ENCODE measurements at regions of chr2 and their contacts with region 1.

Region 1: DNA sequence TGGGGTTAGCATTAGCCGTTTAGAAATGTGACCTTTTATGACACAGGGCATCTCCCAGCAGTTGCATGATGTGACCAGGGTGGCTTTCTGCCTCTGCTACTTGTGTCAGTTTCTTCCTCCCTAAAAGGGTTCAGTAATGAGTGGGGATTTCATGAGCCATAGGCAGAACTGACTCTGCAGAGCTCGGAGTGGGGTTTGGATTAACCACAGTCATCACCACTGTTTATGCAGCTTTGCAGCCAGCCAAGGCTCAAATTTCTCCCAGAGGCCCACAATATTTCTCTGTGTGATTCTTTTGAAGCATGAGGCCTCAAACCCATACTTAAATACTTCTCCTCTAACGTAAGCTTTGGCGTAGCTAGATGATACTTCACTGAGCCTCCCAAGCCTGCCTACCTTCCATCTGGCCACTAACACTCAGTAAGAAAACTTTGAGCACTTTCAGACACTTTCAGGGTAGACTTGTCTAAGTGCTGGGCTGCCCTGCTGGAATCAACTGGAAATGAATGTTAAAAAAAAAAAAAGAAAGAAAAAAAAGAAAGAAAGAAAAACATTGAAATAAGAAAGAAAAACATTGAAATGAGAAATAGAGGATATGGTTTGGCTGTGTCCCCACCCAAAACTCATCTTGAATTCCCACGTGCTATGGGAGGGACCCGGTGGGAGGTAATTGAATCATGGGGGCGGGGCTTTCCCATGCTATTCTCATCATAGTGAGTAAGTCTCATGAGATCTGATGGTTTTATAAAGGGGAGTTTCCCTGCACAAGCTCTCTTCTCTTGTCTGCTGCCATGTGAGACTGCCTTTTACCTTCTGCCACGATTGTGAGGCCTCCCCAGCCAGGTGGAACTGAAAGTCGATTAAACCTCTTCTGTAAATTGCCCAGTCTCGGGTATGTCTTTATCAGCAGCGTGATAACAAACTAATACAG is 11.5 kb upstream of the LAPTM4A start:
- DNase-seq: peak; percentile 33 to 90
- H3K4me3 ChIP-seq: no peak overlapping the region
- H3K27ac ChIP-seq: peak overlapping the region; percentile 71 to 85
- H3K4me1 ChIP-seq: peaks cover 0 to 2% of the 10 kb centered on the region in 2 donors
- H3K27me3 ChIP-seq: no peaks in the 10 kb centered on the region
- CTCF ChIP-seq: peak in 1 of 3 experiments; percentile 7

Region 2: DNA sequence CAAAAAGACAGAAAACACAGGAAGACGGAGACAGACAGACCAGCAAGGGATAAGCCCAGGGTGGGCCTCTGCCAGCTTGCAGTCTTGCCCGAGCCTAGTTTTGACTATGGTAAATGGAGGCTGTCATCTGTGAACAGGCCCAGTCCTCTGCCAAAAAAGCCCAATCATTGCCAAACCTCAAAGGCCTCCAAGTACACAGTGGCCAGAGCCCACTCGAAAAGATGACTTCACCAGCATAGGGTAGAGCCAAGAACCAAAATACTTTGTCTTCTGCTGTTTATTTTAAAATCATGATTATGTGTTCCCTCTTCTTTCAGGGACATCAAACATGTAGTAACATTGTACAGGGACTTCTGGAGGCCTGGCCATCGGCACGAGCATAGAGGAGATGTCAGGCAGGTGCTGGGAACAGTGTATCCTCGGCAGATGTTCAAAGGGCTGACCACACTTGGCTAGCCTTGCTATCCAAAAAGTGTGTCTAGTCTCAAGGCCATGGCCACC is 227.0 kb before region 1 on chr2:
- intact Hi-C with region 1: no loop called
- DNase-seq: no peak
- H3K4me3 ChIP-seq: no peak overlapping the region
- H3K27ac ChIP-seq: peak overlapping the region; percentile 68 to 74
- H3K4me1 ChIP-seq: peaks cover 0 to 10% of the 10 kb centered on the region in 2 donors
- H3K27me3 ChIP-seq: no peaks in the 10 kb centered on the region
- CTCF ChIP-seq: no peak

Region 3: DNA sequence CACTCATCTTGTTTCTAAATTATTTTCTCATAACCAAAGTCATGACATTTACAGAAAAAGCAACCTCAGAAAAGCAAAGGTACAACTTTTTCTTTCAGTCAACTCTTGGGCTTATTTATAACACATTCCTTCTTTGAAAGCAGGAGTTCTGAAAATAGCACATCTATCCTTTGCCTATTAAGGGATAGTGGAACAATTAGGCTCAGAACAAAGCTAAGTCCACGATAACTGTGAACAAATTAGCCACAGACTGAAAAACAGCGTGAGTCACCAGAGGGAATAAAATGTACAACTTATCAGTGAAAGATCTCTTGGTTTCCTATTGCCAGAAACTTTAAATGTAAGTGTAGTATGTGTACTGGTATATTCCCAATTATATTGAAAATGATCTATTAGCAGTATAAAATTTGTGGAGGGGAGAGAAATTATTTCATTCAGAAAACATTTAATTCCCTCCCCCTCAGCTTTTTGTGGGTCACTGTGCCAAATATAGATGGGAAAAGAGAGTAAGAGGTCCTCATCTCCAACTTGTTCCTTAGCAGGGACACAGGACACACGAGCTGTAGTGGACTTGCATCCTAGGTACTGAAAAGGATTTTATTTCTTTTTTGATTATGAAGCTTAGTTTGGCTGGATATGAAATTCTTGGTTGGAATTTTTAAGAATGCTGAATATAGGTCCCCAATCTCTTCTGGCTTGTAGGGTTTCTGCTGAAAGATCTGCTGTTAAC is 35.0 kb before region 1 on chr2:
- intact Hi-C with region 1: loop called (anchors 5 kb)
- DNase-seq: no peak
- H3K4me3 ChIP-seq: no peak overlapping the region
- H3K27ac ChIP-seq: peak overlapping the region; percentile 54 to 76
- H3K4me1 ChIP-seq: peaks cover 0 to 7% of the 10 kb centered on the region in 2 donors
- H3K27me3 ChIP-seq: no peaks in the 10 kb centered on the region
- CTCF ChIP-seq: no peak

Region 4: GRCh38 chr2:20235655-20236302 is 172.9 kb after region 1 on chr2:
- intact Hi-C with region 1: no loop called
- DNase-seq: no peak
- H3K4me3 ChIP-seq: no peak overlapping the region
- H3K27ac ChIP-seq: no peak overlapping the region
- H3K4me1 ChIP-seq: no peaks in the 10 kb centered on the region
- H3K27me3 ChIP-seq: no peaks in the 10 kb centered on the region
- CTCF ChIP-seq: no peak

Region 5: DNA sequence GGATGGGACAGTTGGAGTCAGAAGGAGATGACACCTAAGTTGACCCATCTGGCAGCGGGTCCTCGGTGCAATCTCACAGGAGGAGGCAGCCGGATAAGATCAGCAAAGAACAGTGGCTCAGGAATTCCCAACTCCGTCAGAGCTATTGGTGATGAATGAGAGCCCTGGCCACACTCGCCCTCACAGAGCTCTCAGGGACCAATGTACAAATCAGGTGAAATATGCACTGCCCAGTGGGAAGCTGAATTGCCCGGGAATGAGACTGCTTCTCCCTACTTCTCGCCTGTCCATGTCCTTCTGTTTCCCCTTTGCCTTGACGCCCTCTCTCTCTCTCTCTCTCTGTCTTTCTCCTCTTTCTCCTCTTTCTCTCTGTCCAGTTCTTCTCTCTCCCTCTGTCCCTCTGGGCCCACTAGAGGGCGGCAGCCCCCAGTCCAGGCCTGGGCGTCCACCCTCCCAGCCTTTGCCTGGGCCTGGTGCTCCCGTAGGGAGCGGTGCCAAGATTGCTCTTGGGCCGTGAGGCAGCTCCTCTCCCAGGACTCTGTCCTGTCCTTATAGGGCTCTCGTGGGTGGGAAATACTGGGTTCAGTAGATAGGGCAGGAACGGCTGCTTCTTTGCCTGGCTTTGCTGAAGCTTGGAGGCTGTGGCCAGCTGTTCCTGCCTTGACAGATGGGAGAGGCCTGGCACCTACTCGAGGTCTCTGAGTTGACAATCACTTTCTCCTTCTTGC is 316.1 kb after region 1 on chr2:
- intact Hi-C with region 1: no loop called
- DNase-seq: peak; percentile 44 to 92
- H3K4me3 ChIP-seq: no peak overlapping the region
- H3K27ac ChIP-seq: peak overlapping the region; percentile 4 to 54
- H3K4me1 ChIP-seq: peaks cover 0 to 6% of the 10 kb centered on the region in 2 donors
- H3K27me3 ChIP-seq: no peaks in the 10 kb centered on the region
- CTCF ChIP-seq: peak; percentile 75 to 93 (median 80)

Measured in ascending aorta (tissue), 2 donors.